Tibial artery (tissue), 4 donors: ENCODE measurements at regions of chr1 and their contacts with region 1.

Region 1: GRCh38 chr1:207868774-207869721 is 41.9 kb downstream of the CD34 start:
- DNase-seq: peak; percentile 75 to 90
- H3K4me3 ChIP-seq: peak overlapping the region; percentile 91 to 97
- H3K27ac ChIP-seq: peak overlapping the region; percentile 94 to 99
- H3K4me1 ChIP-seq: peaks cover 3 to 54% (median 42%) of the 10 kb centered on the region in 4 donors
- H3K27me3 ChIP-seq: no peaks in the 10 kb centered on the region
- CTCF ChIP-seq: peak; percentile 74 to 98

Region 2: GRCh38 chr1:207787776-207788175 is 81.3 kb before region 1 on chr1:
- intact Hi-C with region 1: no loop called
- DNase-seq: no peak
- H3K4me3 ChIP-seq: no peak overlapping the region
- H3K27ac ChIP-seq: no peak overlapping the region
- H3K4me1 ChIP-seq: peaks cover 0 to 3% (median 0%) of the 10 kb centered on the region in 4 donors
- H3K27me3 ChIP-seq: no peaks in the 10 kb centered on the region
- CTCF ChIP-seq: no peak

Region 3: GRCh38 chr1:207805841-207806421 is 63.1 kb before region 1 on chr1:
- intact Hi-C with region 1: no loop called
- DNase-seq: peak; percentile 91 to 96
- H3K4me3 ChIP-seq: no peak overlapping the region
- H3K27ac ChIP-seq: peak overlapping the region; percentile 85 to 100
- H3K4me1 ChIP-seq: peaks cover 0 to 71% (median 61%) of the 10 kb centered on the region in 4 donors
- H3K27me3 ChIP-seq: no peaks in the 10 kb centered on the region
- CTCF ChIP-seq: no peak

Region 4: DNA sequence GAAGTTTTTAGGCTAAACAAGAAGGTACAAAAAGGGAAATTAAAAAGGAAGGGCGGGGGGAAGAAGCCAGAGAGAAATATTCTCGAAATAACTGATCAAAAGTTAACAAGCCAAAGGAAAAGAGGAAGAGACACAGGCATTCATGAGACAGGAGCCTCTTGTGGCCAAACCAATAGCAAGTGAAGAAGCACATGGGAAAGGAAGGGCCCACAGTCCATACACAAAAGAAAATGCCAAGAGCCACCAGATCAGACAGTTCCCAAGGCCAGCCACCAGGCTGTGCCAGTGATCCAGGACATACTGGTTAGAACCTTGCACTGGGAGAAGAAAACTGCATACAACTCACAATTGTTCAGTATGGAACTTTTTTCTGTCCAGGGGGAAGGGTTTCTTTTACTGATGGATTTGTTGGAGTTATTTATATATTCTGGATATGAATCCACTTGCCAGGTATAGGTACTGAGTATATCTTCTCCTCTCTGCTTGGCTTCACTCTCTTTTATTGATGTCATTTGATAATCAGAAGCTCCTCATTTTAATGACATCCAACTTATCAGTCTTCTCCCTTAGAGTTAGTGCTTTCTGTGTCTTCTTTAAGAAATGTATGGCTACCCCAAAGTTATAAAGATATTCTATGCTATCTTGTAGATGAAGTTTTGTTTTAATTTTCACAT is 40.4 kb before region 1 on chr1:
- intact Hi-C with region 1: loop called (anchors 2 kb)
- DNase-seq: peak; percentile 86 to 89
- H3K4me3 ChIP-seq: no peak overlapping the region
- H3K27ac ChIP-seq: peak overlapping the region; percentile 13 to 100
- H3K4me1 ChIP-seq: peaks cover 0 to 92% (median 65%) of the 10 kb centered on the region in 4 donors
- H3K27me3 ChIP-seq: no peaks in the 10 kb centered on the region
- CTCF ChIP-seq: peak; percentile 89 to 92